ENCODE measurements at regions of chr19 and their contacts with region 1.

Region 1: GRCh38 chr19:4123615-4124568 is at the start of gene MAP2K2:
- DNase-seq: peak; percentile 96
- H3K4me3 Mint-ChIP-seq: peak within 1 kb of the TSS; percentile 85
- H3K27ac Mint-ChIP-seq: peak within 1 kb of the TSS; percentile 84
- H3K4me1 Mint-ChIP-seq: peaks cover 24% of the 10 kb centered on the region
- H3K27me3 Mint-ChIP-seq: no peaks in the 10 kb centered on the region
- total RNA-seq, gene MAP2K2: 101 to 103 TPM

Region 2: GRCh38 chr19:4007021-4007835 is 116.7 kb before region 1 on chr19 and contains the start of gene PIAS4:
- CTCF ChIA-PET with region 1: no interaction called
- intact Hi-C with region 1: loop called (anchors 5 kb)
- DNase-seq: peak; percentile 96
- H3K4me3 Mint-ChIP-seq: peak within 1 kb of the TSS; percentile 84
- H3K27ac Mint-ChIP-seq: peak within 1 kb of the TSS; percentile 79
- H3K4me1 Mint-ChIP-seq: peaks cover 31% of the 10 kb centered on the region
- H3K27me3 Mint-ChIP-seq: no peaks in the 10 kb centered on the region
- total RNA-seq, gene PIAS4: 16.1 to 20.1 TPM